ENCODE measurements at regions of chr4 and their contacts with region 1.

Region 1: GRCh38 chr4:47933840-47934239 is 19.5 kb upstream of the NFXL1 start:
- DNase-seq: no peak
- H3K4me3 ChIP-seq: no peak overlapping the region
- H3K27ac ChIP-seq: no peak overlapping the region
- H3K4me1 ChIP-seq: no peaks in the 10 kb centered on the region
- H3K27me3 ChIP-seq: no peaks in the 10 kb centered on the region
- CTCF ChIP-seq: peak; percentile 27 to 45 (median 31)
- EP300 ChIP-seq: no peak
- POLR2A ChIP-seq: no peak

Region 2: GRCh38 chr4:47668810-47669408 is 264.9 kb before region 1 on chr4:
- intact Hi-C with region 1: loop called in 1 of 4 experiments (anchors 10 kb)
- DNase-seq: no peak
- H3K4me3 ChIP-seq: no peak overlapping the region
- H3K27ac ChIP-seq: no peak overlapping the region
- H3K4me1 ChIP-seq: no peaks in the 10 kb centered on the region
- H3K27me3 ChIP-seq: no peaks in the 10 kb centered on the region
- CTCF ChIP-seq: peak in 2 of 3 donors; percentile 22 to 27
- EP300 ChIP-seq: no peak
- POLR2A ChIP-seq: no peak